Activated CD8-positive, alpha-beta T cell treated with anti-CD3 and anti-CD28 coated beads, Interleukin-2, amount 10 ng/mL, durations not matched to agents 7 days and 5 days (primary cell): ENCODE measurements at regions of chr17 and their contacts with region 1.

Region 1: GRCh38 chr17:27455914-27456680 is at the start of gene KSR1:
- DNase-seq: peak; percentile 89
- ATAC-seq: peak; percentile 93
- H3K4me3 Mint-ChIP-seq: peak within 1 kb of the TSS; percentile 94
- H3K27ac Mint-ChIP-seq: peak within 1 kb of the TSS; percentile 76
- H3K4me1 Mint-ChIP-seq: peaks cover 50% of the 10 kb centered on the region
- H3K27me3 Mint-ChIP-seq: no peaks in the 10 kb centered on the region
- total RNA-seq, gene KSR1: 45.3 to 45.8 TPM

Region 2: GRCh38 chr17:27466743-27467375 is 10.8 kb after region 1 on chr17:
- CTCF ChIA-PET with region 1: interaction called, 20 read pairs
- POLR2A ChIA-PET with region 1: interaction called, 11 read pairs
- DNase-seq: peak; percentile 85
- ATAC-seq: peak; percentile 85
- H3K4me3 Mint-ChIP-seq: peak overlapping the region; percentile 70
- H3K27ac Mint-ChIP-seq: peak overlapping the region; percentile 92
- H3K4me1 Mint-ChIP-seq: peaks cover 88% of the 10 kb centered on the region
- H3K27me3 Mint-ChIP-seq: no peaks in the 10 kb centered on the region

Region 3: GRCh38 chr17:27473748-27474609 is 17.9 kb after region 1 on chr17:
- CTCF ChIA-PET with region 1: interaction called, 14 read pairs
- POLR2A ChIA-PET with region 1: interaction called, 12 read pairs
- DNase-seq: peak; percentile 85
- ATAC-seq: peak; percentile 50
- H3K4me3 Mint-ChIP-seq: peak overlapping the region; percentile 69
- H3K27ac Mint-ChIP-seq: peak overlapping the region; percentile 98
- H3K4me1 Mint-ChIP-seq: peaks cover 96% of the 10 kb centered on the region
- H3K27me3 Mint-ChIP-seq: no peaks in the 10 kb centered on the region

Region 4: DNA sequence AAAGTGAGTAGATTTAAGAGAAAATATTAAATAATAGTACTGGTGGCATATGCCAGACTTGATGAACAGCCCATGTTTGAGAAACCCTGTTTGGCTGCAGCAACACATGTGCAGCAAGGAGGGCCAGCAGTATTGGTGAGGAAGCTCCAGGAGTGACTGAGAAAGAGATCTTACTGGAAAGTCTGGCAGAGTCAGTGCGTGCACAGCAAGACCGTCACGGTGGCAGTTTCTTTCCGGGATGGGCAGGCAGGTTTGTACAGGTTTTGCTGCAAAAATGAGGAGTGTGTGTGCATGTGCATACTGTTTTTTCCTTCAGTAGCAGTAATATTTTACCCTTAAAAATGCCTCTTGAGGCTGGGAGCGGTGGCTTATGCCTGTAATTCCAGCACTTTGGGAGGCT is 41.6 kb after region 1 on chr17:
- CTCF ChIA-PET with region 1: no interaction called
- POLR2A ChIA-PET with region 1: no interaction called
- DNase-seq: no peak
- ATAC-seq: no peak
- H3K4me3 Mint-ChIP-seq: no peak overlapping the region
- H3K27ac Mint-ChIP-seq: no peak overlapping the region
- H3K4me1 Mint-ChIP-seq: peaks cover 8% of the 10 kb centered on the region
- H3K27me3 Mint-ChIP-seq: no peaks in the 10 kb centered on the region